Esophagus squamous epithelium (tissue), 5 donors: ENCODE measurements at regions of chr9 and their contacts with region 1.

Region 1: DNA sequence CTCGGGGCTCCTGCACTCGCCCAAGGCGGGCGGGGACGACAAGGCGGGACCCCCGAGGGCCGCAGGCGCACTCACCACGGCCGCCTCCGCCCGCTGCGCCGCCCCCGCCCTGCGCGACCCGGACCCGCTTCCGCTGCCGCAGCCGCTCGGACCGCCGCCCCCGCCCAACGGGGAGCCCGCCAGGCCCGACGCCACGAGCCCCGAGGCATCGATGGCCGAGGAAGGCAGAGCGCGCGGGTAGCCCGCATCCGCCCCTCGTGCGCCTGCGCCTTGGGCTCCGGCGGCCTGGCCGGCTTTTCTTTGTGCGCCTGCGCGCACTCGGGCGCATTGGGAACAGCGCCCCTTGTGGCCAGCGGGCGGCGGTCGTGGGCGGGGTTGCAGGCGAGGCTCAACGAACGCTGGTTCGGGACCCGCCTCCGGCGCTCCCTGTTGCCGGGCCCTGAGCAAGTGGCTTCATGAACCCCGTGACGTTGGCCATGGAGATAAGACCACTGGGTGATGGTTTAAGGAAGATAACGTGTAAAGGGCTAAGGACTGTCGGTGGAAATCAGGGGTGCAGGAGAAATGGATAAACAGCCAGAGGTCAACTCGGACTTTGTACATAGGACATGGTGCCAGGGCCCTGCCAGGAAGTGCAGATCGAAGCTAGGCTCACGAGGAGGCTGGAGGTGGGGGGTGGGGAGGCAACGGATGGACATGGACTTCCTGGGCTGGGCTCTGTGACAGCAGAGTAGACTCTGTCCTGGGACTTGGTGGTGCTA is at the starts of genes C8G and FBXW5:
- DNase-seq: peak; percentile 60
- H3K4me3 ChIP-seq: peak within 1 kb of the TSS; percentile 75 to 94 (median 87)
- H3K27ac ChIP-seq: peak within 1 kb of the TSS; percentile 90 to 98 (median 96)
- H3K4me1 ChIP-seq: peaks cover 25 to 62% (median 33%) of the 10 kb centered on the region in 3 donors
- H3K27me3 ChIP-seq: no peaks in the 10 kb centered on the region
- CTCF ChIP-seq: peak; percentile 98 to 100 (median 100)
- POLR2A ChIP-seq: peak in 3 of 4 donors; percentile 51 to 81 (median 74)
- total RNA-seq, gene C8G: 1.6 TPM in 1 of 4 donors, not detected in the others
- total RNA-seq, gene FBXW5: 146 to 210 (median 163) TPM

Region 2: GRCh38 chr9:136762915-136763648 is 181.6 kb before region 1 on chr9:
- intact Hi-C with region 1: no loop called
- DNase-seq: no peak
- H3K4me3 ChIP-seq: no peak overlapping the region
- H3K27ac ChIP-seq: no peak overlapping the region
- H3K4me1 ChIP-seq: peaks cover 0 to 16% (median 0%) of the 10 kb centered on the region in 3 donors
- H3K27me3 ChIP-seq: peaks cover 0 to 90% (median 5%) of the 10 kb centered on the region in 4 donors
- CTCF ChIP-seq: no peak
- POLR2A ChIP-seq: no peak

Region 3: DNA sequence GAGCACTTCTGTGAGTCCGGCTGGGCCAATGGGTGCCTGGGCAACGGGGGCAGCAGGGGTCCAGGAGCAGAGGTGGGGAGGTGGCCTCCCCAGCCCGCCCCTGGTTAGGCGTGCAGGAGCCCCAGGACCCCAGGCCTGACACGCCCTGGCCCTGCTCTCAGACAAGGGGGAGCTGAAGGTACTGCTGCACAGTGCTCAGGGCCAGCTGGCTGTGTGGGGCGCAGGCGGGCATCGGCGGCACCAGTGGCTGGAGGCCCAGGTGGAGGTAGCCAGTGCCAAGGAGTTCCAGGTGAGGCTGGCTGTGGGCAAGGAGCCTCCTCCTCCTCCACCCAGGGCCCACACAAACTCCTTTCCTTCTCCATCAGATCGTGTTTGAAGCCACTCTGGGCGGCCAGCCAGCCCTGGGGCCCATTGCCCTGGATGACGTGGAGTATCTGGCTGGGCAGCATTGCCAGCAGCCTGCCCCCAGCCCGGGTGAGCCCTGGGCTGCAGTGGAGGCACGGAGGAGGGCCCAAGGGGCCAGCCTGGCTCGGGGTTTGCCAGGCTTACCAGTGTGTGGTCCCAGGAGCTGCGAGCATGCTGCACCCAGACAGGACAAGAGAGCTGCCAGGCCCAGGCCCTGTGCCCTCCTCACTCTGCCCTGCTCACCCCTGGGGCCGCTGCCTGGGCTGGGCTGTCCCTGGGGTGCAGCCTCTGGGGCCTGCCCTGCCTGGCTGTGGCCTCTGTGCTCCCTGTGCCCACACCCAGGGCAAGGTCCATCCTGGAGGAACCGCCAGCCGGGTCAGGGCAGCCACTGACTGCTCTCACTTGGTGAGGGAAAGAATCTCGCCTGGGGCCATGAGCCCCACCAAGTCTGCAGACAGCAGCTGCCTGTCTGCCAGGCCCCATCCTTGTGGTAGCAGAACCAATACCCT is 85.6 kb before region 1 on chr9:
- intact Hi-C with region 1: loop called (anchors 10 kb)
- DNase-seq: no peak
- H3K4me3 ChIP-seq: no peak overlapping the region
- H3K27ac ChIP-seq: peak overlapping the region in 3 of 4 donors; percentile 53 to 65 (median 54)
- H3K4me1 ChIP-seq: peaks cover 20 to 59% (median 21%) of the 10 kb centered on the region in 3 donors
- H3K27me3 ChIP-seq: no peaks in the 10 kb centered on the region
- CTCF ChIP-seq: no peak
- POLR2A ChIP-seq: no peak

Region 4: GRCh38 chr9:137029058-137029936 is 84.6 kb after region 1 on chr9:
- intact Hi-C with region 1: loop called (anchors 5 kb)
- DNase-seq: no peak
- H3K4me3 ChIP-seq: peak overlapping the region; percentile 33 to 82 (median 62)
- H3K27ac ChIP-seq: peak overlapping the region; percentile 5 to 72 (median 52)
- H3K4me1 ChIP-seq: peaks cover 29 to 67% (median 35%) of the 10 kb centered on the region in 3 donors
- H3K27me3 ChIP-seq: peaks cover 0 to under 1% (median 0%) of the 10 kb centered on the region in 4 donors
- CTCF ChIP-seq: peak; percentile 66 to 90 (median 85)
- POLR2A ChIP-seq: no peak